AG04450 (cell line): ENCODE measurements at regions of chr5 and their contacts with region 1.

Region 1: DNA sequence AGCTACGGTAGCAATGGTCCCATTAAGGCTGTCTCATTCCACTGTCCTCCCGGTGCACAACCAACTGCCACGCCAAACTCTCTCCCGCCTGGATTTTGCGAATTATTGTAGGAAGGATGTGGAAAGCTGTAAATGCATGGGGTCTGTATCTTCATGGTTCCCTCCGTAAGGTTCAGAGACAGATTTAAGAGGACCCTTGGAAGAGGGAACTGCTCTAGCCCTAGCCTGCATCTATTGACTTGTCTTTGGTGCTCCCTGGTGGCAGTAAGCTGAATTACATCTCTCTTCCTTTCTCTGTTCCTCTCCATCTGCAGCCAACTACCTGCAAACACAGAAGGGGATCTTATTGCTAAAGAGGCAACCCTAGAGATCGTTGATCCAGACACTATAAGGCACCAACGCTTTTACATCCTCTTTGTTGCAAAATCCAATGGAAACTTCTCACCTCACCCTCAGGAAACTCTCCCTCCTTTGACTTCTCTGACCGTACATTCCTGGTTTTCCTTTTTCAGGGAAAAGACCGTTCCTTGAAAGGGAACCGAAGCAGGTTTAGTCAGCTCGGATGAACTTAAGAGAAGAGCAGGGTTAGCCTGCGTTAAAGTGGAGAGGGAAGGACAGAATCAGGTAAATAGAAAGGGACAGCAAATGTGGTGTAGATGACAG is 11.9 kb downstream of the CAPSL start:
- DNase-seq: no peak
- H3K4me3 ChIP-seq: no peak overlapping the region
- H3K27ac ChIP-seq: peak overlapping the region; percentile 1
- H3K27me3 ChIP-seq: no peaks in the 10 kb centered on the region
- CTCF ChIP-seq: peak; percentile 88

Region 2: DNA sequence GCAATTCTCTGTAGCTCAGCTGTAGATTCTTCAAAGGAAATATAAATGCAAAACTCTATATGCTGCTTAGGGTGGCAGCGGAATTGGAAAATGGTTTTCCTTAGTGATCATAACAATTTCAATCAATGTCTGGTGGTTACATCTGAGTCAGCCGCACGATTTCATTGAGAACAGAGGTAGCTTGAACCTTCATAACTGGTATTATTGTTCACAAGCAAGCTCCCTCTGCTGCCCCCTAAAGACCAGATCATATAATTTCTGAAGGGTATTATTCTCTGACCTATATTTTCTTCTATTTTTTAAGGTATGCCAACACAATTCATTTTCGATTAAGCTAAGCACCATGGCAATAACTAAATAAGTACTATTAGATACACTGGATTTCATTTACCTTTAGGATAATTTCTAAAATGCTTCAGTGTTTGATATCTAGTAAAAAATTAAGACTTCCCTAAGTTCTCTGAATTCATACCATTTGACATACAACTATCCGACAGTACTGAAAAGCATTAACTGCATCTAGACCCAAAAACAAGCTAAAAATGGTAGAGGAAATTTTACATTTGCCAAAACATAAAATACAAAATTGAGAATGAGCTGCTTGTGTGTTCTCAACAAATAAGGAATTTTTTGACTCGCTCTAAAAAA is 490.0 kb before region 1 on chr5:
- CTCF ChIA-PET with region 1: interaction called, 11 read pairs
- POLR2A ChIA-PET with region 1: no interaction called
- DNase-seq: no peak
- H3K4me3 ChIP-seq: no peak overlapping the region
- H3K27ac ChIP-seq: no peak overlapping the region
- H3K27me3 ChIP-seq: no peaks in the 10 kb centered on the region
- CTCF ChIP-seq: peak; percentile 61

Region 3: DNA sequence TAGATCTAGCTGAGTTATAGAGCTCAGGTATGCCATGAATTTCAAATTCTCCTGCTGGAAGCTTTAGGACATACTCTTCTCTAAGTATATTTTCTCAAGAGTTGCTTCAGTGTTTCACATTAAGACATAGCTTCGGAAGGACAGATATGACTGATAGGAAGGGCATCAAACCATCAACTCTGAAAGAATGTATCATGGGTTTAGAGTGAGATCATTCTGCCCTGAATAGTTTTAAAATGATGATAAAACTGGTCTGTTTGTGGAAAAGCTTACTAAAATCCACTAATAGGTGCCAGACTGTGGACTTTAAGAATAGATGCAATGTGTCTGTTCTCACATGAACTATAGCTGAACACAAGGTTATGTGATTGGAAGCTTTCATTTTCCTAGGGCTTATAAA is 300.4 kb before region 1 on chr5:
- CTCF ChIA-PET with region 1: interaction called, 61 read pairs
- POLR2A ChIA-PET with region 1: no interaction called
- DNase-seq: no peak
- H3K4me3 ChIP-seq: no peak overlapping the region
- H3K27ac ChIP-seq: no peak overlapping the region
- H3K27me3 ChIP-seq: no peaks in the 10 kb centered on the region
- CTCF ChIP-seq: no peak

Region 4: DNA sequence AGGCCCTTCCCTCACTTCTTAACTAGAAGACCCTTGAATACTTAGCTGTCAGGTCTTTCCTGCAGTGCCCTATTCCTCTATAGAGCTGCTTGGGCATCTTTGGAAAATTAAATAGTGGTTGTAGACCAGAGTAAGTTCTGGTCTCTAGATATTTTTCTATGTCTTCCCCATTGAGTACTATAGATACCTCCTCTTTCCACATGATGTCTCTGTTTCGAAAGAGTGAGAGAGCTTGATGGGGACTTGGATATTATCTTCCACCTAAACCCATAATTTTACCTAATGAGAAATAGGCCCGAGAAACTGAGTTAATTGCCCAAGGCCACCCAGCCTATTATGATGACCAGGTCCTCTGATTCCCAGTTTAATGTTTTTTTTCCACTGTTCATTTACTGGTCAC is 268.6 kb before region 1 on chr5:
- CTCF ChIA-PET with region 1: interaction called, 254 read pairs
- POLR2A ChIA-PET with region 1: no interaction called
- DNase-seq: no peak
- H3K4me3 ChIP-seq: no peak overlapping the region
- H3K27ac ChIP-seq: no peak overlapping the region
- H3K27me3 ChIP-seq: no peaks in the 10 kb centered on the region
- CTCF ChIP-seq: no peak

Region 5: GRCh38 chr5:35857606-35858205 is 68.8 kb before region 1 on chr5:
- CTCF ChIA-PET with region 1: interaction called, 19 read pairs
- POLR2A ChIA-PET with region 1: no interaction called
- DNase-seq: peak; percentile 26
- H3K4me3 ChIP-seq: peak overlapping the region; percentile 38
- H3K27ac ChIP-seq: no peak overlapping the region
- H3K27me3 ChIP-seq: no peaks in the 10 kb centered on the region
- CTCF ChIP-seq: no peak